Vagina (tissue), 2 donors: ENCODE measurements at regions of chr12 and their contacts with region 1.

Region 1: DNA sequence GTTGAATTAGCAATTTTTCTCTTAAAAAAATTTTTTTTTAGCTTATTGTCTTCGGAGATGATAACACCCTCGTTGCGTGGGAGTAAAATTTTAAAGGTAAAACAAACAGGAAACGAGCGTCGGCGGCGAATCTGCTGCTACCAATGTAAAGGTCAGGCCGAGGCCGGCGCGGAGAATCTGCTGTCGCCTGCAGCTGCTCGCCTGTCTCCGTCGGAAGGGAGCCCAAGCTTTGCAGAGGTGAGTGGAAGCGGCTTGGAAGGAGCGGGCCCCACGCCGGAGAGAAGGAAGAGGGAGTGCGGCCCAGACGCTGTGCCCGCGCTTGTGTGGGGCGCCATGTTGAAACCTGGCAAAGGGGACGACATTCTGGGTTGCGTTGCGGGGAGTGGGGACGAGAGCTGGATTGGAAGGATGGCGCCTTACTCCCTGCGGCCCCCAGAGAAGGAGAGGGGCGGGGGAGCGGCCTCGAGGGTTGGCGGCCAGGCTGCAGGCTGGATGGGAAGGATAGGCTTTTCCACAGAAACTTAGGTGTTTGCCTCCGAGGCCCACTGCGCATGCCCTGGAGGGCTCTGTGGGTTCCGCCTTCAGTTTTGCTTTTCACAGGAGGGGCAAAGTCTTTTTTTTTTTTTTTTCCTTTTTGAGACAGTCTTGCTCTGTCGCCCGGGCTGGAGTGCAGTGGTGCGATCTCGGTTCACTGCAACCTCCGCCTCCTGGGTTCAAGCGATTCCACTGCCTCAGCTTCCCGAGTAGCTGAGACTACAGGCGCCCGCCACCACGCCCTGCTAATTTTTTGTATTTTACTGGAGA is at the start of gene SNRNP35:
- DNase-seq: no peak
- H3K4me3 ChIP-seq: peak within 1 kb of the TSS; percentile 79 to 98
- H3K27ac ChIP-seq: peak within 1 kb of the TSS; percentile 98
- H3K4me1 ChIP-seq: peaks cover 17% of the 10 kb centered on the region
- H3K27me3 ChIP-seq: no peaks in the 10 kb centered on the region
- CTCF ChIP-seq: no peak
- POLR2A ChIP-seq: peak in 1 of 2 donors; percentile 11
- total RNA-seq, gene SNRNP35: 16.9 TPM

Region 2: DNA sequence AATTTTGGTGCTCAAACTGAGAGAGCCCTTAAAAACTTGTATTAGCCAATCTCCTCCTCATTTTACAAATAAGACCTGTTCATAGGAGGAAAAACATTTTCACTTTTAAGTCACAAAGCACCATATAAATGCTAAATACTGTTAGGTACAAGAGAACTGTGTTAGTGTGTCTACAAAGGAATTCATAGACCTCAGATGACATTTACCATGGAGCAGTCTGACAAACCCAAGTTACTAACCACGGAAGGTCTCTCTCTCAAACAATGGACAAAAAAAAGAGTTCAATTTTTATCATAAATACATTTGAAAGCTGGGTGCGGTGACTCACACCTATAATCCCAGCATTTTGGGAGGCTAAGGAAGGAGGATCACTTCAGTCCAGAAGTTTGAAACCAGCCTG is 103.6 kb before region 1 on chr12:
- intact Hi-C with region 1: no loop called
- DNase-seq: no peak
- H3K4me3 ChIP-seq: no peak overlapping the region
- H3K27ac ChIP-seq: no peak overlapping the region
- H3K4me1 ChIP-seq: peaks cover 36% of the 10 kb centered on the region
- H3K27me3 ChIP-seq: no peaks in the 10 kb centered on the region
- CTCF ChIP-seq: no peak
- POLR2A ChIP-seq: no peak

Region 3: DNA sequence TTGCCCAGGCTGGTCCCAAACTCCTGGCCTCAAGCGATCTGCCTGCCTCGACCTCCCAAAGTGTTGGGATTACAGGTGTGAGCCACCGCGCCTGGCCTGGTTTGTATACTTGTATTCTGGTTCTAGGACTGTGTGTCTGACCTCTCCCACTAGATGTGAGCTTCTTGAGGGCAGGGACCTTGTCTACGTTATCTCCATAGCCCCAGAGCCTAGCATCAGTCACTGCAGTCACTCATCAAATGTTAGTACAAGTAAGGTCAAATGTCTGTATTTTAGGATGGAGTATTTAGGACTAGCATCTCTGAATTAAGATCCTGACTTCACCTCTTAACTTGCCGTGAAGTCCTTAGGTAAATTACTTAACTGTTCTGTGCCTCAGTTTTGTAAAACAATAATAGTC is 24.6 kb before region 1 on chr12:
- intact Hi-C with region 1: loop called (anchors 2 kb)
- DNase-seq: no peak
- H3K4me3 ChIP-seq: peak overlapping the region; percentile 61 to 90
- H3K27ac ChIP-seq: peak overlapping the region; percentile 35
- H3K4me1 ChIP-seq: peaks cover 42% of the 10 kb centered on the region
- H3K27me3 ChIP-seq: no peaks in the 10 kb centered on the region
- CTCF ChIP-seq: no peak
- POLR2A ChIP-seq: no peak

Region 4: DNA sequence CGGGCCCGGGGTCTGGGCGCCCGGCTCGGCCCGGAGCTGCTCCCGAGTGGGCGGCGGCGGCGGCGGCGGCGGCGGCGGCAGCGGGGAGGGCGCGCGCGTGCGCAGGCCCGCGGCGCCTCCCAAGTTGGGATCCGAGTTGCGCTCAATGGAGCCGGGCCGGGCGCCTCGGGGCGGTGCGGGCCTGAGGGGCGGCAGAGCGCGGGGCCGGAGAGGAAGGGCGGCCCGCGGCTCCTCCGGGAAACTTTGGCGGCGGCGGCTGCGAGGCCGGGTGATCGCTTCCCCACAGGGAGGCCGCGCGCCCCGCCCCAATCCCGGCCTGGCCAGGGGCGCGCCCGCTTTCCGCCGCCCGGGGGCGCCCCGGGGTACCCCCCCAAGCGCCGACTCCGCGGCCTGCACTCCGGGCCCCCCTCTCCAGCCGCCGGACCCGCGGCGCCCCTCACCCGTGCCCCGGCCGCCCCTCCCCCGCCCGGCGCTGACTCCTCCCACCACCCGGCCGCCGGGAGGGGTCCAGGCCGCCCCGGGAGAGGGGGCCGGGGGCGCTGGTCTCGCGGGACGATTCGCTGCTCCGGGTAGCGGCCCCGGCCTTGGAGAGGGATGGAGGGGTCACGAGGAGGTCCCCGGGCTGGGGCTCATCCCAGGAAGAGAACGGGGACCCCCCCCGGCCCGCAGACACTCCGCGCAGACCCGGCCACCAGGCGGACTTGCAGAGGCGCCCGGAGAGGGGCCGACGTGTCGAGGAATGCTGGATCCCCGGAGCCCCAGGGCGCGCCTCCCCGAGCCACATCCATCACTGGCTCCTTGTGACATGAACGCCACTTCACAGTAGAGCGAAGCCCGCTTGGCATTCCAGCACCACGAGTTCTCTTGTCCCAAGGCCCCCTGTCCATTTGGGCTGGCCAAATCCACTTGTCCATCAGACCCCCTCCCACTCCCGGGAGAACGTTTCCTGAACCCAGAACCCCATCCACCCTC is 75.8 kb after region 1 on chr12 and contains the start of gene RILPL1:
- intact Hi-C with region 1: loop called (anchors 5 kb)
- DNase-seq: no peak
- H3K4me3 ChIP-seq: peak within 1 kb of the TSS; percentile 77 to 86
- H3K27ac ChIP-seq: peak within 1 kb of the TSS; percentile 88
- H3K4me1 ChIP-seq: peaks cover 30% of the 10 kb centered on the region
- H3K27me3 ChIP-seq: no peaks in the 10 kb centered on the region
- CTCF ChIP-seq: peak in 2 of 3 experiments; percentile 25 to 36
- POLR2A ChIP-seq: no peak
- total RNA-seq, gene RILPL1: 29.7 TPM